Left cardiac atrium (tissue), 4 donors: ENCODE measurements at regions of chr2 and their contacts with region 1.

Region 1: GRCh38 chr2:127106951-127107621 is at the start of gene BIN1:
- DNase-seq: peak; percentile 90
- ATAC-seq: peak; percentile 89 to 92
- total RNA-seq, gene BIN1: 16.2 to 23.6 TPM

Region 2: DNA sequence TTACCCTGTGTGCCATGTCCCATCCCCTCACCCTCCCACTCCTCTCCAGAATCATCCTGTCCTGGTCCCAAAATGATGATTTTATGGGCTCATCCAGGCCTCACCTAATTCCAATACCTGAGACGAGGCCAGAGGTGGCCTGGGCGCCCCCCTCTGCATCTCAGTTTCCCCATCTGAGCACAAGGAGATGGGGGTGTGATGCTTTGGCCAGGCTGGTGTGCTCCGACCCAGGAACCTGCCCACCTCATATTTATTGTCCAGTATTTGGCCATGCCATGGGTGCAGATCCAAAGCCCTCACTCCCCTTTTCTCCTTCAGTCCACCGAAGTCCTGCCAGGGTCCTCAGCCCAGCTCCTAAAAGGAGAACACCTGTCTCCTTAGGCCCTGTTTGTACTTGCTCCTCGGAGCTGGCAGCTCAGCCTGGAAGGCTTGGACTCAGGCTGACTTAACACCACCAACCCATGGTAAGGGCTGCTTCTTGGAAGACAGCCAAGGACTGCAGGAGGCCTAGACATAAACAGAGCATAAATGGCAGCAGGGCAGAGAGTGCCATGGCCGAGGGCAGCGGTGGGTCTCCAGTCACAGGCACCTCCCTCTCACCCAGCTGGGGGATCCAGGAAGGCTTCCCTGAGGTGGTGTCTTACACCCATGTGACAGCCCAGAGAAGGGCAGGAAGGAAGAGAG is 204.8 kb before region 1 on chr2:
- intact Hi-C with region 1: no loop called
- DNase-seq: no peak
- ATAC-seq: no peak

Region 3: GRCh38 chr2:127153691-127154158 is 46.6 kb after region 1 on chr2:
- intact Hi-C with region 1: loop called in 1 of 2 experiments (anchors 10 kb)
- DNase-seq: no peak
- ATAC-seq: peak in 1 of 2 donors; percentile 73